Activated B cell treated with CpG ODN at 0.5 μM for 24 hours (primary cell): ENCODE measurements at regions of chr2 and their contacts with region 1.

Region 1: DNA sequence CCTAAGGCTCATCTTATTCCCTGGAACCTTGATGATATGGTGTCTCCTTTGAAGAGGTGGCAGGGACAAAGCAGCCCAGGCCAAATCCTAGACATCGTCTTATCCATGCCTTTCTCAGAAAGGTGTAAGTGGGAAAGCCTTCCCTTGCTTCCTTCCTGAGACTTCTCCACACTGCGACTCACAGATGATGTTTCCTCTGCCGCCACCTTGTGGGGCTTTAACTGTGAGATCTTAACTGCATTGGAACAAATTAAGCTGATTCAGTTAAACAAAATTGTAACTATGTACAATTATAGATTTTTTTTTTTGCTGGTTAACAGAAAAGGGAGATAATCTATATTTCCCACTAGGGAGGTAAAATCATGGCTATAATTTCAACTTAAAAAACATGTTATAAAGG is 10.0 kb upstream of the GCA start:
- DNase-seq: no peak
- ATAC-seq: peak; percentile 56
- H3K4me3 Mint-ChIP-seq: no peak overlapping the region
- H3K27ac Mint-ChIP-seq: no peak overlapping the region
- H3K4me1 Mint-ChIP-seq: no peaks in the 10 kb centered on the region
- H3K27me3 Mint-ChIP-seq: no peaks in the 10 kb centered on the region
- CTCF ChIP-seq: no peak

Region 2: GRCh38 chr2:162153608-162154224 is 180.3 kb before region 1 on chr2:
- CTCF ChIA-PET with region 1: interaction called, 9 read pairs
- POLR2A ChIA-PET with region 1: no interaction called
- intact Hi-C with region 1: loop called (anchors 1 kb)
- DNase-seq: no peak
- ATAC-seq: peak; percentile 82
- H3K4me3 Mint-ChIP-seq: no peak overlapping the region
- H3K27ac Mint-ChIP-seq: no peak overlapping the region
- H3K4me1 Mint-ChIP-seq: peaks cover 3% of the 10 kb centered on the region
- H3K27me3 Mint-ChIP-seq: peaks cover 8% of the 10 kb centered on the region
- CTCF ChIP-seq: peak; percentile 86

Region 3: GRCh38 chr2:162184821-162185446 is 149.0 kb before region 1 on chr2:
- CTCF ChIA-PET with region 1: no interaction called
- POLR2A ChIA-PET with region 1: no interaction called
- intact Hi-C with region 1: no loop called
- DNase-seq: no peak
- ATAC-seq: no peak
- H3K4me3 Mint-ChIP-seq: no peak overlapping the region
- H3K27ac Mint-ChIP-seq: no peak overlapping the region
- H3K4me1 Mint-ChIP-seq: no peaks in the 10 kb centered on the region
- H3K27me3 Mint-ChIP-seq: peaks cover 1% of the 10 kb centered on the region
- CTCF ChIP-seq: no peak

Region 4: DNA sequence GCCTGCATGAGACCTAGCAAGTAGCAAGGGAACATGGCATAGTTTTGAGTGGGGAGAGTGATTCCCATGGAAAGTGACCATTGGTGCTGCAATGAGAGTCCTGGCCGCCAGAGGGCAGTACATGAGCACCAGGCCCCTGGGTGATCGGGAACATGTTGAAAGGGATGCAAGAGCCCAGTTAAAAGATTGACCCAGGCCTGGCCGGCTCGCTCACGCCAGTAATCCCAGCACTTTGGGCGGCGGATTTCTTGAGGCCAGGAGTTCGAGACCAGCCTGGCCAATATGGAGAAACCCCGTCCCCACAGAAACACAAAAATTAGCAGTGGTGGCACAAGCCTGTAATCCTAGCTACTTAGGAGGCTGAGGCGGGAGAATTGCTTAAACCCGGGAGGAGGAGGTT is 112.9 kb before region 1 on chr2:
- CTCF ChIA-PET with region 1: interaction called, 64 read pairs
- POLR2A ChIA-PET with region 1: interaction called, 3 read pairs
- intact Hi-C with region 1: loop called (anchors 1 kb)
- DNase-seq: peak; percentile 35
- ATAC-seq: peak; percentile 64
- H3K4me3 Mint-ChIP-seq: no peak overlapping the region
- H3K27ac Mint-ChIP-seq: no peak overlapping the region
- H3K4me1 Mint-ChIP-seq: no peaks in the 10 kb centered on the region
- H3K27me3 Mint-ChIP-seq: peaks cover 15% of the 10 kb centered on the region
- CTCF ChIP-seq: peak; percentile 40

Region 5: GRCh38 chr2:162318328-162319180 is 15.4 kb before region 1 on chr2 and contains the start of gene IFIH1:
- CTCF ChIA-PET with region 1: interaction called, 27 read pairs
- POLR2A ChIA-PET with region 1: interaction called, 16 read pairs
- intact Hi-C with region 1: loop called (anchors 1 kb)
- DNase-seq: peak; percentile 72
- ATAC-seq: peak; percentile 93
- H3K4me3 Mint-ChIP-seq: peak within 1 kb of the TSS; percentile 94
- H3K27ac Mint-ChIP-seq: peak within 1 kb of the TSS; percentile 99
- H3K4me1 Mint-ChIP-seq: peaks cover 68% of the 10 kb centered on the region
- H3K27me3 Mint-ChIP-seq: no peaks in the 10 kb centered on the region
- CTCF ChIP-seq: no peak
- total RNA-seq, gene IFIH1: 61.8 and 63.0 TPM in 2 replicates

Region 6: DNA sequence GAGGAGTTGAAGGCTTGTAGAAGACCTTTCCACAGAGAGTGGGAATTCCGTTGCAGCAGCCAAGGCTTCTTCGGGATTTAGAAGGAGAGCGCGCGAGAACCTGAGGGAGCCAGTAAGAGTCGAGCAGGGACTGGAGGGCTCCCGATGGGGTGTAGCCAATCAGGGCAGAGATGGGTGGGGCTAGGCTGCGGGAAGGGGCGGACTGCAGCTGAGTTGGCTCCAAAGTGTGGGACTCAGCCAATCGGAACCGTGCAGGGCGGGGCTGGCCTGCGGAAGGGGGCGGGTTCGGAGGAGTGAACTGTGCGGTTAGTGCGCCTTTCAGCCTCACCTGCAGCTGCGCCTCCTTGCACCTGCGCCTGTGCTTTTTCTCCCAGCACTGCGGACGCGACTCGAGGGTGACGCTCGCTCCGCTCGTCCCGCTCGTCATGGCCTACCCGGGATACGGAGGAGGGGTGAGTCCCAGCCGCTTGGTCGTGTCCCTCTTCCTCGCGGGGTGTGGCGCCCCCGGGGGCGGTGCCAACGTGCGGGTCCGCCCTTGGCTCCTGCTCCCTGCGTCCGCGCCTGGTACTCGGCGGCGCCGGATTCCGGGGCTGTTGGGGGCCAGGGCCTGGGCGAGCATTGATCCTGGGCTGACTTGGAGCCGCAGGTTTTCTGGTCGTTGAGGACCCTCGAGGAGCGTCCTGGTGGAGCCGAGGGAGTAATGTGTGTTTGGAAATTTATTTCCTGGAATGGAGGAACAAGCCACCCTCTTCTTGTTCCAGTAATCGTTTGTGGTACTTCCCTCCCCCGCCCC is 10.1 kb after region 1 on chr2 and contains the start of gene GCA:
- CTCF ChIA-PET with region 1: interaction called, 15 read pairs
- POLR2A ChIA-PET with region 1: interaction called, 5 read pairs
- intact Hi-C with region 1: no loop called
- DNase-seq: peak; percentile 99
- ATAC-seq: peak; percentile 98
- H3K4me3 Mint-ChIP-seq: peak within 1 kb of the TSS; percentile 91
- H3K27ac Mint-ChIP-seq: peak within 1 kb of the TSS; percentile 84
- H3K4me1 Mint-ChIP-seq: peaks cover 18% of the 10 kb centered on the region
- H3K27me3 Mint-ChIP-seq: no peaks in the 10 kb centered on the region
- CTCF ChIP-seq: no peak
- total RNA-seq, gene GCA: 31.3 and 33.9 TPM in 2 replicates